ENCODE measurements at regions of chr20 and their contacts with region 1.

Region 1: DNA sequence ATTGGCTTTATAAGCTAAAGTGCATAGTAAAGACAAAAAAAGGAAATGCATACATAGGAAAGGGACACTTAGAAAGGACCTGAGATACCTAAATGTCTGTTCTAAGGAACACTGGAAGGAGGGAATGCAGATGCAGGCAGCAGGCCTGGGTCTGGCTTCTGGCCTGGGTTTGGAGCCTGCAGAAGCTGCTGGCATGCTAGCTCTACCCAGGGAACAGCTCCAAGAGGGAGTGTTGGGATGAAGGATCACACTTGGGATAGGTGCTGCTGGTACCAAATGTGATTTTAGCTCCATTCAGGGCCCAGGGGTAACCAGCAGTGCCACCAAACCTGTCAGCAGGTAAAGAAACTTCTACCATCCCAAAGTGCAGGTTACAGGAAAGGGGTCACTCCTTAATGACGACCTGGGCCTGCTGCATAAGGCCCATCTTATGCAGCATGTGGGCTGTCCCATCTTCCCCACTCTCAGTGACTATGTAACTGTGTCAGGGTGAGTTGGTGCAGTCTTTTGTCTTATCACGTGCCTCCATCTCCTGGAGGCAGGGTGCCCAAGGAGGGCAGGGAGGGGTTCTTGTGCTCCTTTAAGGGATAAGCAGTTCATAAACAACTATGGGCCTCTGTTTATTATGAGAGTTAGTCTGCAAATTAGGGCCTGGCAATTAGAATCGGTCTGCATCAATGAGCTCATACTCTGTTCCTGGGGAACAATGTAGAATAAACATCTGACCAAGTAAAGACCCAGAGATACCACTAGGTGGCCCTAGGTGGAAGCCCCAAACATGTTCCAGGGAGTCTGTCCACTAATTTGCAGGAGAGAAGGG is 26.9 kb downstream of the DDX27 start:
- DNase-seq: peak; percentile 25
- H3K4me3 Mint-ChIP-seq: no peak overlapping the region
- H3K27ac Mint-ChIP-seq: peak overlapping the region; percentile 30
- H3K4me1 Mint-ChIP-seq: peaks cover 2% of the 10 kb centered on the region
- H3K27me3 Mint-ChIP-seq: no peaks in the 10 kb centered on the region

Region 2: GRCh38 chr20:49140834-49141233 is 105.3 kb before region 1 on chr20:
- CTCF ChIA-PET with region 1: no interaction called
- POLR2A ChIA-PET with region 1: no interaction called
- intact Hi-C with region 1: no loop called
- DNase-seq: no peak
- H3K4me3 Mint-ChIP-seq: no peak overlapping the region
- H3K27ac Mint-ChIP-seq: no peak overlapping the region
- H3K4me1 Mint-ChIP-seq: peaks cover 17% of the 10 kb centered on the region
- H3K27me3 Mint-ChIP-seq: no peaks in the 10 kb centered on the region

Region 3: DNA sequence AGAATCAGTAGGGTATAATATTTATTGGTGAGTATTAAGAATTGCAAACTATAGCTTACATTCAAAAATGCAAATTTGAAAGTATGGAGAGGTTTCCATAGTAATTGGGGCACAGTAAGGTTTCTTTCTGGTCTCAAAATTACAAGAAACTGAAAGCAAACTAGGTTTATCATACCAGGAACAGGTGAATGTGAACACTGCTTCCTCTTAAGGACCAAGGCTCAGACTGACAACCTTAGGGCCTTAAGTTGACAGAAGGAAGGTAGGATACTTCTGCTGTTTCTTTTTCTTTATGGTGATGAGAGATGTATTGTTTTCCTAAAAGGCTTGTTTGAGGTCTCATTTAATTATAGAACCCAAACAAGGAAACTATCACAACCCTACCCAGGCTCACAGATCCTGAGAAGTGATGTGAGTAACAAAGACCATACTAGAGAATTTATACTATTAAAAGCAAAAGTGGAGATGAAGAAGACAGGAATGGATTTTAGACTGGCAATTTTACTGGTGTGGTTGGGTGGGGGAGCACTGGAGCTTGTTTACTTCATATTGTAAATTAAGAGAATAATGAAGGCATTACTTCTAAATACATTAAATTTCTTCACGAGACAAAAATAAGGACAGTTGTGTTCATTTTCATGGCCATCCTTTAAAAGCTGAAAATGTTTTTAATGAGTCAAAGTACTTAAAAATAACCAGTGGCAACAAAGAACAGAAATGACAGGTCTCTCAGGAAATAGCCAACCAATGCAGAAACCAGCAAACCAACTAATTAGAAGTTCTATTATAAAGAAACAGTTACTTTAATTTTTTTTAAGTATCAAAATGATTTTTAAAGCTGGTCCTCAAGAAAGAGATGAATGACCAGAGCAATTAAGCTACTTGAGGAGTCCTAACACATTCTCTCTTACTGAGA is 79.3 kb before region 1 on chr20:
- CTCF ChIA-PET with region 1: no interaction called
- POLR2A ChIA-PET with region 1: no interaction called
- intact Hi-C with region 1: no loop called
- DNase-seq: no peak
- H3K4me3 Mint-ChIP-seq: peak overlapping the region; percentile 41
- H3K27ac Mint-ChIP-seq: peak overlapping the region; percentile 84
- H3K4me1 Mint-ChIP-seq: peaks cover 61% of the 10 kb centered on the region
- H3K27me3 Mint-ChIP-seq: no peaks in the 10 kb centered on the region

Region 4: GRCh38 chr20:49256261-49256660 is 10.1 kb after region 1 on chr20:
- CTCF ChIA-PET with region 1: interaction called, 10 read pairs
- POLR2A ChIA-PET with region 1: interaction called, 3 read pairs
- intact Hi-C with region 1: no loop called
- DNase-seq: no peak
- H3K4me3 Mint-ChIP-seq: no peak overlapping the region
- H3K27ac Mint-ChIP-seq: no peak overlapping the region
- H3K4me1 Mint-ChIP-seq: peaks cover 20% of the 10 kb centered on the region
- H3K27me3 Mint-ChIP-seq: no peaks in the 10 kb centered on the region

Region 5: DNA sequence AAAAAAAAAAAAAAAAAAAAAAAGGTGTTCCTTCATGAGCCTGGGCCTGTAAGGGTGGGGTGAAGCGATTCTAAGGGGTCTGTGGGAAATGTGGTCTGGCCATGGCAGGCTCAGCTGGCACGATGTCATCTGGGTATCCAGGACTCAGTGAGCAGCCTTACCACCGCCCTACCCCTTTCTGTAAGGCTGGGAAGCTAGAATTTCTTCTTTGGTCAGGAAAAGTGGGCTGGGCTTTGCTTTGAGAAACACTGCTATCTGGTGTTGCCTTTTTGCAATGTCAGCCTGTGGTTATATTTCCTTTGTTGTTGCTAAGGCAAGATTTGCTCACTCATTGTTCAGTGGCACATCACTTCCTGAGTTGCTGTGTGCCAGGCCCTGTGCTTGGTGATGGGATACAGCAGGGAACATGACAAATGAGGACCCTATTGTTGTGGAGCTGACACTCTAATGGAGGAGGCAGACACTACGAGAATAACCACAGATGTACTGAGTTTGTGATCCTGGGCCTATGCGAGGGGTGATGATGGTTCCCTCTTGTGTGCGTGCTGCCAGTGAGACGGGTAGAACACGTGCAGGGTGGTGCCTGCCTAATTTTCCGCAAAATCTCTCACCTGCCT is 77.6 kb after region 1 on chr20:
- CTCF ChIA-PET with region 1: interaction called, 8 read pairs
- POLR2A ChIA-PET with region 1: no interaction called
- intact Hi-C with region 1: loop called (anchors 1 kb)
- DNase-seq: peak; percentile 48
- H3K4me3 Mint-ChIP-seq: peak overlapping the region; percentile 24
- H3K27ac Mint-ChIP-seq: peak overlapping the region; percentile 69
- H3K4me1 Mint-ChIP-seq: peaks cover 26% of the 10 kb centered on the region
- H3K27me3 Mint-ChIP-seq: peaks cover 26% of the 10 kb centered on the region

Measured in activated CD4-positive, alpha-beta memory T cell treated with anti-CD3 and anti-CD28 coated beads for 36 hours (primary cell).